GM12878 (cell line): ENCODE measurements at regions of chr12 and their contacts with region 1.

Region 1: DNA sequence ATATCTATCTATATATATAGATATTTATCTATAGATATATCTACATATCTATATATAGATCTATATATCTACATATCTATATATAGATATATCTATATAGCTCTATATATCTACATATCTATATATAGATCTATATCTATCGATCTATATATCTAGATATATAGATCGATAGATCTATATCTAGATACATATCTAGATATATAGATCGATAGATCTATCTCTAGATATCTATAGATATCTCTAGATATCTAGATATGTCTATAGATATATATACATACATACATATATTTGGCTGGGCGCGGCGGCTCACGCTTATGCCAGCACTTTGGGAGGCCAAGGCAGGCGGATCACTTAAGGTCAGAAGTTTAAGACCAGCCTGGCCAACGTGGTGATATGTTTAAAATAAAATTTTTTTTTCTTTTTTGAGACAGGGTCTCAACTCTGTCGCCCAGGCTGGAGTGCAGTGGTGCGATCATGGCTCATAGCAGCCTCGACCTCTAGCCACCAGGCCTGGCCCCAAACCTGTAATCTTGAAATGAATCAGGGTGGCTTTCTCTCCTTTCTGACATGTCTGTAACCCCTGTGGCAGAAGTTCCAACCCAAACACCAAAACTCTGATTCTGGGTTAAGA is 18.1 kb downstream of the ARPC3 start:
- DNase-seq: no peak
- ATAC-seq: peak; percentile 38; the same call in 1 of the 3 replicates
- H3K4me3 ChIP-seq: no peak overlapping the region
- H3K27ac ChIP-seq: no peak overlapping the region
- H3K4me1 ChIP-seq: peaks cover 5% of the 10 kb centered on the region
- H3K27me3 ChIP-seq: no peaks in the 10 kb centered on the region
- CTCF ChIP-seq: no peak
- EP300 ChIP-seq: no peak
- POLR2A ChIP-seq: no peak
- RAD21 ChIP-seq: no peak

Region 2: GRCh38 chr12:110100315-110100970 is 331.6 kb before region 1 on chr12:
- CTCF ChIA-PET with region 1: interaction called, 59 read pairs
- POLR2A ChIA-PET with region 1: no interaction called
- RAD21 ChIA-PET with region 1: interaction called, 29 read pairs
- SMC1A ChIA-PET with region 1: interaction called, 19 read pairs
- in situ Hi-C with region 1: loop called (anchors 5 kb)
- intact Hi-C with region 1: loop called (anchors 1 kb)
- DNase-seq: peak; percentile 93
- ATAC-seq: peak; percentile 93
- H3K4me3 ChIP-seq: no peak overlapping the region
- H3K27ac ChIP-seq: peak overlapping the region; percentile 49
- H3K4me1 ChIP-seq: peaks cover 9% of the 10 kb centered on the region; the same call in 1 of the 2 replicates
- H3K27me3 ChIP-seq: no peaks in the 10 kb centered on the region
- CTCF ChIP-seq: peak; percentile 85 to 92 (median 85)
- EP300 ChIP-seq: peak in 1 of 2 experiments; percentile 30; a peak in 1 of 4 replicates
- POLR2A ChIP-seq: no peak
- RAD21 ChIP-seq: peak; percentile 96

Region 3: GRCh38 chr12:110280779-110281548 is 151.1 kb before region 1 on chr12 and contains the start of gene ATP2A2:
- CTCF ChIA-PET with region 1: interaction called, 4 read pairs
- POLR2A ChIA-PET with region 1: interaction called, 3 read pairs
- RAD21 ChIA-PET with region 1: interaction called, 10 read pairs
- SMC1A ChIA-PET with region 1: interaction called, 7 read pairs
- in situ Hi-C with region 1: no loop called
- intact Hi-C with region 1: no loop called
- DNase-seq: peak; percentile 30
- ATAC-seq: peak; percentile 80
- H3K4me3 ChIP-seq: peak within 1 kb of the TSS; percentile 84
- H3K27ac ChIP-seq: peak within 1 kb of the TSS; percentile 93
- H3K4me1 ChIP-seq: no peaks in the 10 kb centered on the region; the same call in 1 of the 2 replicates
- H3K27me3 ChIP-seq: no peaks in the 10 kb centered on the region
- CTCF ChIP-seq: no peak
- EP300 ChIP-seq: no peak
- POLR2A ChIP-seq: peak; percentile 94
- RAD21 ChIP-seq: no peak
- polyA plus RNA-seq, gene ATP2A2: 3.7 to 5.1 TPM

Region 4: DNA sequence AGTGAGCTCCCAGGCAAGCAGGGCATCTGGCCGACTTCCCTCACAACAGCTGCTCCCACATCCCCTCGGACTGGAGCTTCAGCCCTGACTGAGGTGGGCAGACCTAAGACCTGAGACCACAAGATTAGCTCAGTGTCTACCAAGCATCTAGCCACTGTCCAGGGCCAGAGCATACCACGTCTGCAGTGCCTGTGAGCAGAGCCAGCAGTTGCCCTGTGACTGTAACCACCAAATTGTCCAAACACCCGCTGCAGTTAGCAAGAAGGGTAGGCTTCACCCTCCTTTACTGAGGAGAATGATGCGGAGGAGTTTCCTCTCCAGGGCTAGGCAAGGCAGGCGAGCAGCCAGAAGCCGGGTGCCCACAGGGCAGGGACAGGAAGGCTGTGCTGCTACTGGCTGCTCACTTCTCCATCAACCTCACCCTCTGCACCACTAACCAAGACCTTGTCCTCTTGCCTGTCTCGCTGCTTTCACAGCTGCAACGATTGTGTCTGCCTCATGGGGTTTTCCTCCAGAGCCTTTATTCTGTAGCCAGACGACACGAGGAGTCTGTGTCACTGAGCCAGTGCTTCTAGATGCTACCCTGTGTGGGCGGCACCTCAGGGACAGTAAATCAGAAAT is 82.4 kb before region 1 on chr12:
- CTCF ChIA-PET with region 1: interaction called, 55 read pairs
- POLR2A ChIA-PET with region 1: interaction called, 11 read pairs
- RAD21 ChIA-PET with region 1: interaction called, 34 read pairs
- SMC1A ChIA-PET with region 1: interaction called, 28 read pairs
- in situ Hi-C with region 1: no loop called
- intact Hi-C with region 1: no loop called
- DNase-seq: no peak
- ATAC-seq: peak; percentile 44
- H3K4me3 ChIP-seq: no peak overlapping the region
- H3K27ac ChIP-seq: no peak overlapping the region
- H3K4me1 ChIP-seq: no peaks in the 10 kb centered on the region; the same call in 1 of the 2 replicates
- H3K27me3 ChIP-seq: no peaks in the 10 kb centered on the region
- CTCF ChIP-seq: no peak
- EP300 ChIP-seq: no peak
- POLR2A ChIP-seq: peak; percentile 81
- RAD21 ChIP-seq: no peak

Region 5: GRCh38 chr12:110371408-110372055 is 60.5 kb before region 1 on chr12:
- CTCF ChIA-PET with region 1: interaction called, 8 read pairs
- POLR2A ChIA-PET with region 1: interaction called, 5 read pairs
- RAD21 ChIA-PET with region 1: interaction called, 10 read pairs
- SMC1A ChIA-PET with region 1: interaction called, 8 read pairs
- in situ Hi-C with region 1: no loop called
- intact Hi-C with region 1: no loop called
- DNase-seq: peak; percentile 57
- ATAC-seq: peak; percentile 88
- H3K4me3 ChIP-seq: no peak overlapping the region
- H3K27ac ChIP-seq: peak overlapping the region; percentile 37
- H3K4me1 ChIP-seq: peaks cover 21% of the 10 kb centered on the region
- H3K27me3 ChIP-seq: no peaks in the 10 kb centered on the region
- CTCF ChIP-seq: no peak
- EP300 ChIP-seq: peak; percentile 24 to 65; a peak in 1 of 4 replicates
- POLR2A ChIP-seq: peak; percentile 61
- RAD21 ChIP-seq: no peak

Region 6: DNA sequence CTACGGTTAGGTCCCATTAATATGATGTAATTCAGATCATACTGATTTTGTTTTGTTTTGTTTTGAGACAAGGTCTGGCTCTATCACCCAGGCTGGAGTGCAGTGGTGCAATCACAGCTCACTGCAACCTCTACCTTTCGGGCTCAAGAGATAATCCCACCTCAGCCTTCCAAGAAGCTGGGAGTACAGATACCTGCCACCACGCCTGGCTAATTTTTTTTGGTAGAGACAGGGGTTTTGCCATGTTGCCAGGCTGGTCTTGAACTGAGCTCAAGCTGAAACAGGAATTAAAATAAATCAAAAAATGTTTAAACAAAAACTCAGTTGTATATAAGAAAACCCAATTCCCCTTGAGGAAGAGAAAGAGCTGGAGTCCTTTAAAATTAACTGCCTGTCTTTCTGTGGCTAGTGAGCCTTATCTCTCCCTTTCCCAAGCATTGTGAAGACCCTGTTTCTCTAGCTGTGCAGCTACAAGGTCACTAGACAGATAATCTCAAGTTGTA is 10.9 kb before region 1 on chr12:
- CTCF ChIA-PET with region 1: interaction called, 21 read pairs
- POLR2A ChIA-PET with region 1: no interaction called
- RAD21 ChIA-PET with region 1: interaction called, 9 read pairs
- SMC1A ChIA-PET with region 1: interaction called, 5 read pairs
- in situ Hi-C with region 1: no loop called
- intact Hi-C with region 1: no loop called
- DNase-seq: no peak
- ATAC-seq: no peak
- H3K4me3 ChIP-seq: no peak overlapping the region
- H3K27ac ChIP-seq: no peak overlapping the region
- H3K4me1 ChIP-seq: no peaks in the 10 kb centered on the region
- H3K27me3 ChIP-seq: no peaks in the 10 kb centered on the region
- CTCF ChIP-seq: no peak
- EP300 ChIP-seq: no peak
- POLR2A ChIP-seq: no peak
- RAD21 ChIP-seq: no peak

Region 7: DNA sequence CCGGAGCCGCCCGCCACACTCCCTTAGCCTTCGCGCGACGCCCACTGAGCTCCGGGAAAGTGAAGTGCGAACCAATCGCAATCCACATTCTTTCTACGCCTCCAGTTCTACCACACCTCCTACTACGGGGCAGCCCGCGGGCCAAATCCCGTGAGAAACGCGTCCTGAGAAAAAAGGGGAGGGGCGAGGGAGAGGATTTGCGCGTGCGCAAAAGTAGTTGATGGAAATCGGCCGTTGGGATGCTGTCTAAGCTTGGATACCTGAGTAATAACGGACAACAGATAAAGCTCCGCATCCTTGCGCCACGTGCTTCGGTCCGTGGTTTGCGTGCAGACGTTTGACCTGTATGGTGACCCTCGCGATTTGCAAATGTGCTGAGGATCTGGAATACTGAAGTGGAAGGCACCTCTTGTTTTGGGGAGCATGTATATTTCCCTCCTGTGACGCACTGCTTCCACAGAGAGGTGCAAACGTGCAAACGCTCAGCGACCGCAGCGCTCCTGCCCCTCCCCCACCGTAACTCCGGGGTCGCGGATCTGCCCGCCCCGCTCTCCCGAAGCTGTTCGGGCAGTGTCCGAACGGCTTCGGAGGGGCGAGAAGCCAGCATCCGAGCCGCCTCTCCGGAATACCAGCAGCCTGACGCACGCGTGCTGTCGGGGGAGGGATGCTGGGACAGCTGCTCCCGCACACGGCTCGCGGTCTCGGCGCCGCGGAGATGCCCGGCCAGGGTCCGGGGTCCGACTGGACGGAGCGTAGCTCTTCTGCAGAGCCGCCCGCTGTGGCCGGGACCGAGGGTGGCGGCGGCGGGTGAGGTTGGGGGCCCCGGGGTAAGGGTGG is 36.4 kb after region 1 on chr12 and contains the starts of genes FAM216A and GPN3:
- CTCF ChIA-PET with region 1: interaction called, 5 read pairs
- POLR2A ChIA-PET with region 1: interaction called, 7 read pairs
- RAD21 ChIA-PET with region 1: interaction called, 11 read pairs
- SMC1A ChIA-PET with region 1: no interaction called
- in situ Hi-C with region 1: no loop called
- intact Hi-C with region 1: no loop called
- DNase-seq: peak; percentile 96
- ATAC-seq: peak; percentile 88
- H3K4me3 ChIP-seq: peak within 1 kb of the TSS; percentile 73
- H3K27ac ChIP-seq: peak within 1 kb of the TSS; percentile 91
- H3K4me1 ChIP-seq: peaks cover 6% of the 10 kb centered on the region
- H3K27me3 ChIP-seq: no peaks in the 10 kb centered on the region
- CTCF ChIP-seq: no peak
- EP300 ChIP-seq: no peak
- POLR2A ChIP-seq: peak; percentile 91
- RAD21 ChIP-seq: no peak
- polyA plus RNA-seq, gene FAM216A: 15.0 to 36.0 TPM
- polyA plus RNA-seq, gene GPN3: 76.9 to 78.7 TPM